ENCODE measurements at regions of chr3 and their contacts with region 1.

Region 1: GRCh38 chr3:112734718-112735350 is 93.9 kb upstream of the CCDC80 start:
- DNase-seq: peak; percentile 27 to 85 (median 53)
- ATAC-seq: peak; percentile 63
- H3K4me3 ChIP-seq: no peak overlapping the region
- H3K4me3 Mint-ChIP-seq: no peak overlapping the region
- H3K27ac ChIP-seq: no peak overlapping the region
- H3K27ac Mint-ChIP-seq: no peak overlapping the region
- H3K4me1 ChIP-seq: peaks cover 37% of the 10 kb centered on the region
- H3K4me1 Mint-ChIP-seq: peaks cover 47% of the 10 kb centered on the region
- H3K27me3 ChIP-seq: no peaks in the 10 kb centered on the region
- H3K27me3 Mint-ChIP-seq: no peaks in the 10 kb centered on the region
- CTCF ChIP-seq: peak; percentile 78

Region 2: GRCh38 chr3:111904376-111905241 is 830.2 kb before region 1 on chr3:
- CTCF ChIA-PET with region 1: no interaction called
- POLR2A ChIA-PET with region 1: no interaction called
- intact Hi-C with region 1: no loop called
- DNase-seq: peak in 2 of 14 experiments; percentile 7 to 17
- ATAC-seq: no peak
- H3K4me3 ChIP-seq: no peak overlapping the region
- H3K4me3 Mint-ChIP-seq: no peak overlapping the region
- H3K27ac ChIP-seq: no peak overlapping the region
- H3K27ac Mint-ChIP-seq: no peak overlapping the region
- H3K4me1 ChIP-seq: no peaks in the 10 kb centered on the region
- H3K4me1 Mint-ChIP-seq: no peaks in the 10 kb centered on the region
- H3K27me3 ChIP-seq: no peaks in the 10 kb centered on the region
- H3K27me3 Mint-ChIP-seq: no peaks in the 10 kb centered on the region
- CTCF ChIP-seq: no peak

Region 3: GRCh38 chr3:112642912-112643506 is 91.8 kb before region 1 on chr3:
- CTCF ChIA-PET with region 1: interaction called, 9 read pairs
- POLR2A ChIA-PET with region 1: interaction called, 3 read pairs
- intact Hi-C with region 1: loop called (anchors 5 to 10 kb)
- DNase-seq: peak; percentile 62 to 89 (median 74)
- ATAC-seq: peak; percentile 100
- H3K4me3 ChIP-seq: peak overlapping the region; percentile 23
- H3K4me3 Mint-ChIP-seq: peak overlapping the region; percentile 58
- H3K27ac ChIP-seq: no peak overlapping the region
- H3K27ac Mint-ChIP-seq: no peak overlapping the region
- H3K4me1 ChIP-seq: peaks cover 15% of the 10 kb centered on the region
- H3K4me1 Mint-ChIP-seq: peaks cover 6% of the 10 kb centered on the region
- H3K27me3 ChIP-seq: peaks cover 0 to 15% of the 10 kb centered on the region in 2 experiments
- H3K27me3 Mint-ChIP-seq: peaks cover 5% of the 10 kb centered on the region
- CTCF ChIP-seq: peak; percentile 77

Region 4: GRCh38 chr3:112779558-112780480 is 45.0 kb after region 1 on chr3:
- CTCF ChIA-PET with region 1: no interaction called
- POLR2A ChIA-PET with region 1: no interaction called
- intact Hi-C with region 1: no loop called
- DNase-seq: no peak
- ATAC-seq: no peak
- H3K4me3 ChIP-seq: no peak overlapping the region
- H3K4me3 Mint-ChIP-seq: no peak overlapping the region
- H3K27ac ChIP-seq: no peak overlapping the region
- H3K27ac Mint-ChIP-seq: no peak overlapping the region
- H3K4me1 ChIP-seq: peaks cover 14% of the 10 kb centered on the region
- H3K4me1 Mint-ChIP-seq: peaks cover 10% of the 10 kb centered on the region
- H3K27me3 ChIP-seq: no peaks in the 10 kb centered on the region
- H3K27me3 Mint-ChIP-seq: no peaks in the 10 kb centered on the region
- CTCF ChIP-seq: no peak

Region 5: GRCh38 chr3:112814266-112814665 is 79.4 kb after region 1 on chr3:
- CTCF ChIA-PET with region 1: interaction called, 4 read pairs
- POLR2A ChIA-PET with region 1: interaction called, 7 read pairs
- intact Hi-C with region 1: loop called in 1 of 2 experiments (anchors 2 kb)
- DNase-seq: peak in 3 of 14 experiments; percentile 38 to 47 (median 45)
- ATAC-seq: no peak
- H3K4me3 ChIP-seq: no peak overlapping the region
- H3K4me3 Mint-ChIP-seq: no peak overlapping the region
- H3K27ac ChIP-seq: no peak overlapping the region
- H3K27ac Mint-ChIP-seq: no peak overlapping the region
- H3K4me1 ChIP-seq: peaks cover 5% of the 10 kb centered on the region
- H3K4me1 Mint-ChIP-seq: peaks cover 29% of the 10 kb centered on the region
- H3K27me3 ChIP-seq: no peaks in the 10 kb centered on the region
- H3K27me3 Mint-ChIP-seq: no peaks in the 10 kb centered on the region
- CTCF ChIP-seq: peak; percentile 54

Region 6: GRCh38 chr3:112979240-112979832 is 244.5 kb after region 1 on chr3:
- CTCF ChIA-PET with region 1: interaction called, 31 read pairs
- POLR2A ChIA-PET with region 1: interaction called, 9 read pairs
- intact Hi-C with region 1: loop called (anchors 1 kb)
- DNase-seq: peak in 4 of 14 experiments; percentile 39 to 77 (median 72)
- ATAC-seq: no peak
- H3K4me3 ChIP-seq: no peak overlapping the region
- H3K4me3 Mint-ChIP-seq: peak overlapping the region; percentile 1
- H3K27ac ChIP-seq: no peak overlapping the region
- H3K27ac Mint-ChIP-seq: peak overlapping the region; percentile 6
- H3K4me1 ChIP-seq: peaks cover 36% of the 10 kb centered on the region
- H3K4me1 Mint-ChIP-seq: peaks cover 73% of the 10 kb centered on the region
- H3K27me3 ChIP-seq: no peaks in the 10 kb centered on the region
- H3K27me3 Mint-ChIP-seq: no peaks in the 10 kb centered on the region
- CTCF ChIP-seq: peak; percentile 94

Region 7: GRCh38 chr3:113051302-113051711 is 316.5 kb after region 1 on chr3:
- CTCF ChIA-PET with region 1: no interaction called
- POLR2A ChIA-PET with region 1: no interaction called
- intact Hi-C with region 1: loop called in 1 of 2 experiments (anchors 10 kb)
- DNase-seq: peak; percentile 75 to 92 (median 86)
- ATAC-seq: peak; percentile 91
- H3K4me3 ChIP-seq: no peak overlapping the region
- H3K4me3 Mint-ChIP-seq: no peak overlapping the region
- H3K27ac ChIP-seq: no peak overlapping the region
- H3K27ac Mint-ChIP-seq: no peak overlapping the region
- H3K4me1 ChIP-seq: peaks cover 5% of the 10 kb centered on the region
- H3K4me1 Mint-ChIP-seq: peaks cover 19% of the 10 kb centered on the region
- H3K27me3 ChIP-seq: no peaks in the 10 kb centered on the region
- H3K27me3 Mint-ChIP-seq: no peaks in the 10 kb centered on the region
- CTCF ChIP-seq: peak; percentile 82

Region 8: GRCh38 chr3:114290911-114291901 is 1556.4 kb after region 1 on chr3:
- CTCF ChIA-PET with region 1: no interaction called
- POLR2A ChIA-PET with region 1: no interaction called
- intact Hi-C with region 1: no loop called
- DNase-seq: peak; percentile 83 to 94 (median 90)
- ATAC-seq: peak; percentile 86
- H3K4me3 ChIP-seq: peak overlapping the region; percentile 40
- H3K4me3 Mint-ChIP-seq: peak overlapping the region; percentile 75
- H3K27ac ChIP-seq: peak overlapping the region; percentile 52 to 63
- H3K27ac Mint-ChIP-seq: peak overlapping the region; percentile 78
- H3K4me1 ChIP-seq: peaks cover 49% of the 10 kb centered on the region
- H3K4me1 Mint-ChIP-seq: peaks cover 26% of the 10 kb centered on the region
- H3K27me3 ChIP-seq: no peaks in the 10 kb centered on the region
- H3K27me3 Mint-ChIP-seq: no peaks in the 10 kb centered on the region
- CTCF ChIP-seq: peak; percentile 87